ENCODE measurements at regions of chr11 and their contacts with region 1.

Region 1: GRCh38 chr11:61129639-61130523 is 27.6 kb downstream of the CD5 start:
- DNase-seq: peak; percentile 97
- ATAC-seq: peak; percentile 90
- H3K4me3 Mint-ChIP-seq: no peak overlapping the region
- H3K27ac Mint-ChIP-seq: peak overlapping the region; percentile 55
- H3K4me1 Mint-ChIP-seq: peaks cover 15% of the 10 kb centered on the region
- H3K27me3 Mint-ChIP-seq: no peaks in the 10 kb centered on the region; the same call in 1 of the 2 replicates
- CTCF ChIP-seq: peak; percentile 89

Region 2: GRCh38 chr11:60970369-60970774 is 159.5 kb before region 1 on chr11:
- CTCF ChIA-PET with region 1: interaction called, 10 read pairs
- POLR2A ChIA-PET with region 1: no interaction called
- DNase-seq: peak; percentile 78
- ATAC-seq: peak; percentile 88
- H3K4me3 Mint-ChIP-seq: no peak overlapping the region
- H3K27ac Mint-ChIP-seq: no peak overlapping the region
- H3K4me1 Mint-ChIP-seq: no peaks in the 10 kb centered on the region
- H3K27me3 Mint-ChIP-seq: peaks cover 11% of the 10 kb centered on the region
- CTCF ChIP-seq: peak; percentile 74

Region 3: DNA sequence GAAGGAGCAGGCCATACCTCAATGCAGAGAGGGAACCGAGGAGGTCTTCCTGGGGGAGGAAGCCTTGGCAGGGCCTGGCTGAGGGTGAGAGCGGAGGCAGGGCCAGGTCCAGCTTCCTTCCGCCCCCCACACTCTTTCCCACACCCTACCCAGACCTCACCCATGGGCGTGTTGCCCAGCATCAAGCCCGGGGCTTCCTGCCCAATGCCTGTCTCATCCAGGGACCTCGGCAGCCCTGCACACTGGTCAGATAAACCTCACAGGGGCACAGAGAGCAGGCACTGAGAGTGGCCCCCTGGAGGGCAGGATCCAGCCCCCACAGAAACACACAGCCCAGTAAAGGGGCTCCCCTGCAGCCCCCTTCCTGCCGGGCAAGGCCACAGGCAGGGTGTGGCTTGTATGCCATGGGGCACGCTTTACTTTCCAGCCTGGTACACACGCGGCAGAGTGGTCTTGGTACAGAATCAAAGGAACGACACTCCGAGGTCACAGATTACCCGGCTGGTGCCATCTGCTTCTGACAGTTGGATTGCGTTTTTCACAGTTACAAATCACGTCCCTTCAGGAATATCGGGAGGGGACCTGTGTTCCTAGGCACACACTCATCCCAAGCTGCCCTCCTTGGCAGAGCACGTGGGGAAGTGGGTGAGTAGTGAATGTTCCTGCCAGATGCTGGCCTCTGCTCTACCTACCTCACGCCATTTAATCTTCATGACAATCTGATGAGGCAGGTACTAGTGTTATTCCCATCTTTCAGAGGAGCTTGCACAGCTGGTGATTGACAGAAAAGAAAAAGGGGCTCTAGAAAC is 47.6 kb before region 1 on chr11:
- CTCF ChIA-PET with region 1: interaction called, 13 read pairs
- POLR2A ChIA-PET with region 1: no interaction called
- DNase-seq: no peak
- ATAC-seq: no peak
- H3K4me3 Mint-ChIP-seq: no peak overlapping the region
- H3K27ac Mint-ChIP-seq: no peak overlapping the region
- H3K4me1 Mint-ChIP-seq: no peaks in the 10 kb centered on the region
- H3K27me3 Mint-ChIP-seq: no peaks in the 10 kb centered on the region
- CTCF ChIP-seq: no peak

Region 4: GRCh38 chr11:61298663-61299244 is 168.9 kb after region 1 on chr11:
- CTCF ChIA-PET with region 1: no interaction called
- POLR2A ChIA-PET with region 1: no interaction called
- DNase-seq: no peak
- ATAC-seq: no peak
- H3K4me3 Mint-ChIP-seq: no peak overlapping the region
- H3K27ac Mint-ChIP-seq: peak overlapping the region; percentile 9
- H3K4me1 Mint-ChIP-seq: peaks cover 20% of the 10 kb centered on the region
- H3K27me3 Mint-ChIP-seq: peaks cover 2% of the 10 kb centered on the region
- CTCF ChIP-seq: no peak